GM12878 (cell line): ENCODE measurements at regions of chr9 and their contacts with region 1.

Region 1: DNA sequence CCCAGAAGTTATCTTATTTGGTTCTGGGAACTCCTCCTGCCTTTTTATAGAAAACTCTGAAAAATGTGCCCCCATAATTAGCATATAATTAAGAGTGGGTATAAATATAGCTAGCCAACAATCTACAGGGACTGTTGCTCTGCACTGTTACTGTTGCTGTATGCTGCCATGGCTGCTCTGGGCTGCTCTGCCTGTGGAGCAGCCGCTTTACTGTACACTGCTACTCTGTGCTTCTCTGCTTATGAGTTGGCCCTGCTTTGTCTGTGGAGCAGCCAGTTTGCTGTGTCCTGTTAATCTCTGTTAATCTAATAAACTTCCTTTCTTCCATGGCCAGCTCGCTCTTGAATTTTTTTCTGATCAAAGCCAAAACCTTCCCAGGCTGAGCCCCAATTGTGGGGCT is 2244.0 kb upstream of the ACO1 start:
- DNase-seq: no peak
- ATAC-seq: no peak
- H3K4me3 ChIP-seq: no peak overlapping the region
- H3K27ac ChIP-seq: no peak overlapping the region
- H3K4me1 ChIP-seq: no peaks in the 10 kb centered on the region
- H3K27me3 ChIP-seq: no peaks in the 10 kb centered on the region
- CTCF ChIP-seq: no peak
- EP300 ChIP-seq: no peak
- POLR2A ChIP-seq: no peak
- RAD21 ChIP-seq: no peak

Region 2: DNA sequence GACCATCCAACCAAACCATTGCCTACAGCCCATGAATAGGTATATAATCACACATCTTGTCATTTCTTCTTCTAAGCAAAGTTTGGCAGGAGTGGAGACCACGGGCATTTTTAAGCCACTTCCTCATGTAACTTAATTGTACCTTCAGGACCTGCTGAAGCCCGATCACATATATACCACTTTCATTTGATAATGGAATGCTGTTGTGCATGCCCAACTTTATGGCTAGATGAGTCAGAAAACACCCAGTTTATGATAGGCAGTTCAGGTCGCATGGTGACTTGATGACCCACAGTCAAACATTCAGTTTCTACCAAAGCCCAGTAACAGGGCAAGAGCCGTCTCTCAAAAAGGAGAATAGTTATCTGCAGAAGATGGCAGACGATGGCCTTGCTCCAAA is 51.0 kb before region 1 on chr9:
- CTCF ChIA-PET with region 1: no interaction called
- POLR2A ChIA-PET with region 1: no interaction called
- RAD21 ChIA-PET with region 1: no interaction called
- SMC1A ChIA-PET with region 1: no interaction called
- in situ Hi-C with region 1: loop called (anchors 5 kb)
- intact Hi-C with region 1: no loop called
- DNase-seq: no peak
- ATAC-seq: no peak
- H3K4me3 ChIP-seq: no peak overlapping the region
- H3K27ac ChIP-seq: no peak overlapping the region
- H3K4me1 ChIP-seq: no peaks in the 10 kb centered on the region
- H3K27me3 ChIP-seq: no peaks in the 10 kb centered on the region
- CTCF ChIP-seq: no peak
- EP300 ChIP-seq: no peak
- POLR2A ChIP-seq: no peak
- RAD21 ChIP-seq: no peak

Region 3: GRCh38 chr9:30504502-30504905 is 364.1 kb after region 1 on chr9:
- CTCF ChIA-PET with region 1: no interaction called
- POLR2A ChIA-PET with region 1: no interaction called
- RAD21 ChIA-PET with region 1: no interaction called
- SMC1A ChIA-PET with region 1: no interaction called
- in situ Hi-C with region 1: no loop called
- intact Hi-C with region 1: no loop called
- DNase-seq: no peak
- ATAC-seq: no peak
- H3K4me3 ChIP-seq: no peak overlapping the region
- H3K27ac ChIP-seq: no peak overlapping the region
- H3K4me1 ChIP-seq: no peaks in the 10 kb centered on the region
- H3K27me3 ChIP-seq: no peaks in the 10 kb centered on the region
- CTCF ChIP-seq: no peak
- EP300 ChIP-seq: no peak
- POLR2A ChIP-seq: no peak
- RAD21 ChIP-seq: no peak